ENCODE measurements at regions of chr14 and their contacts with region 1.

Region 1: DNA sequence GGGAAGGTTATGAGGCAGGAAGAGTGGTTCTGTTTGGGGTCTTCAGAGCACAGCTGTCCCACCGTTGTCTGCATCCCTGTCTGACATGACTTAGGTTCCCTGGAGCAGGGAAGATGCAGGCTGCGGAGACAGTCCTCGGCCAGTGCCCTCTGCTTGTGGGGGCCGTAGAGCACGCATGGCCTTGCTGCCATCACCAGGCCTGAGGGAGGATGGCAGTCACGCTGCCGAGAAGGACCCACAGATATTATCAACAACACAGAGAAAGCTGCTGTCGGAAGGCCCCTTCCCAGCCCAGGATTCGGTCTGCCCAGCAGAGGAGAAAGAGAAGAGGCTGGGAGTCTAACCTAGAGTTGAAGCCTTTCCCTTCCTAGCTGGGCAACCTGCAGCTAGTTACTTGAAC is 35.0 kb downstream of the ERH start:
- DNase-seq: no peak
- ATAC-seq: no peak
- H3K4me3 ChIP-seq: no peak overlapping the region
- H3K27ac ChIP-seq: no peak overlapping the region
- H3K4me1 ChIP-seq: peaks cover 13% of the 10 kb centered on the region
- H3K27me3 ChIP-seq: no peaks in the 10 kb centered on the region
- CTCF ChIP-seq: peak in 2 of 3 experiments; percentile 18 to 19; a peak in 1 of 6 replicates
- EP300 ChIP-seq: no peak
- POLR2A ChIP-seq: no peak
- RAD21 ChIP-seq: peak; percentile 50

Region 2: GRCh38 chr14:69346710-69347109 is 16.3 kb before region 1 on chr14:
- CTCF ChIA-PET with region 1: interaction called, 11 read pairs
- POLR2A ChIA-PET with region 1: interaction called, 4 read pairs
- RAD21 ChIA-PET with region 1: interaction called, 5 read pairs
- SMC1A ChIA-PET with region 1: interaction called, 10 read pairs
- in situ Hi-C with region 1: no loop called
- intact Hi-C with region 1: no loop called
- DNase-seq: no peak
- ATAC-seq: peak; percentile 34; the same call in 2 of the 3 replicates
- H3K4me3 ChIP-seq: no peak overlapping the region
- H3K27ac ChIP-seq: no peak overlapping the region
- H3K4me1 ChIP-seq: peaks cover 7% of the 10 kb centered on the region
- H3K27me3 ChIP-seq: no peaks in the 10 kb centered on the region
- CTCF ChIP-seq: peak; percentile 44 to 64 (median 49)
- EP300 ChIP-seq: no peak
- POLR2A ChIP-seq: no peak
- RAD21 ChIP-seq: peak; percentile 36; the same call in 1 of the 2 replicates

Region 3: DNA sequence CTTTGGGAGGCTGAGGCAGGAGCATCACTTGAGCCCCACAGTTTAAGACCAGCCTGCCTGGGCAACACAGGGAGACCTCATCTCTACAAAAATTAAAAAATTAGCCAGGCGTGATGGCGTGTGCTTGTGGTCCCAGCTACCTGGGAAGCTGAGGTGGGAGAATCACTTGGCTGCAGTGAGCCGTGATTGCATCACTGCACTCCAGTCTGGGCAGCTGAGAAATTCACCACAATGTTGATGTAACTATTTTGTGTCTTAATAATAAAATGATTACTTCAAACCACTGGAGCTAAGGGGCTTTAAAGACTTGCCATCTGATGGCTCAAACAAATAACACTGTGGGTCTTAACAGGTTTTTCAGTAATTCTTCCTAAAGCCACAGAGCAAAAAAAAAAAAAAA is 24.3 kb after region 1 on chr14:
- CTCF ChIA-PET with region 1: interaction called, 7 read pairs
- POLR2A ChIA-PET with region 1: interaction called, 23 read pairs
- RAD21 ChIA-PET with region 1: interaction called, 143 read pairs
- SMC1A ChIA-PET with region 1: interaction called, 21 read pairs
- in situ Hi-C with region 1: no loop called
- intact Hi-C with region 1: no loop called
- DNase-seq: no peak
- ATAC-seq: no peak
- H3K4me3 ChIP-seq: no peak overlapping the region
- H3K27ac ChIP-seq: no peak overlapping the region
- H3K4me1 ChIP-seq: peaks cover 12% of the 10 kb centered on the region
- H3K27me3 ChIP-seq: no peaks in the 10 kb centered on the region
- CTCF ChIP-seq: no peak
- EP300 ChIP-seq: no peak
- POLR2A ChIP-seq: no peak
- RAD21 ChIP-seq: no peak

Region 4: DNA sequence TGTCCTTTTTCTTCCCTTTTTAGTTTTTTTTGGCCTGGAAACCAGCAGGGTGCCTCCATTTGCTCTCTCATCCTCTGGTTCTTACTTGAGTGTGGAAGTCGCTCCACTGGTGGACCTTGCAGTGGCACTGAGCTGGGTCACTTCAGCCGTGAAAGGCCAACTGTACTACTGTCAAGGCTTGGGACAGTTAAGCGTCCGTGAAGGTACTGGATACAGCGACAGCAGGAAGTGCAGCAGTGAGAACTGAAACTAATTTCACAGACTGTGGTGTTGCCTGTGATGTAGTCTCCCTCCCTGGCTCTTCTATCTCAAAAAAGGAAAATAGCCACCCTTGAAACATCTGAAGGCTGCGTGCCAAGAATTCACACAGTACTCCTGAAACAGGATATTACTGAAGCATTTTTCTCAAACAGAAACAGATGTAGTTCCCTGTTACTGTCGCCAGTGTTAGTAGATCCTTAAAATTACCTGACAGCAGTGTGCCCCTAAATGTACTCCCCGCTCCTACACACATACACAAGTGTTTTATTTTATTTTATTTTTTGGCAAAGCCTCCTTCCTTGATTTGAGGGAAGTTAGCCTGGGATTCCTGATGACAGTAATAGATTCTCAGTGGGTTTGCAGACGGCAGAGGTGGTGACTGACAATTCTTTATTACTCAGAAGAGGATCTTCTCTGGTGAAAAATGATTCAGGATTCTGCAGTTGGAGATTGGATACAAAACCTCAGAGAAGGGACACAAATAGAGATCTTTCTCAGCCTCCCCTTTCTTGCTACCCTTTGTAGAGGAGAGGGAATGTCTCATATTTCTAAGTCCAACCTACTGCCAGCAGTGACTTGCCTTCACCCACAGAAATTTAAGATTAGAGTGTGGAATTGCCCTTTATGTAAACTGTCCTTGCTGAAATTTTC is 252.7 kb after region 1 on chr14:
- CTCF ChIA-PET with region 1: no interaction called
- POLR2A ChIA-PET with region 1: no interaction called
- RAD21 ChIA-PET with region 1: no interaction called
- SMC1A ChIA-PET with region 1: no interaction called
- in situ Hi-C with region 1: no loop called
- intact Hi-C with region 1: no loop called
- DNase-seq: peak; percentile 97
- ATAC-seq: peak; percentile 75
- H3K4me3 ChIP-seq: peak overlapping the region; percentile 88
- H3K27ac ChIP-seq: peak overlapping the region; percentile 97
- H3K4me1 ChIP-seq: peaks cover 55% of the 10 kb centered on the region
- H3K27me3 ChIP-seq: no peaks in the 10 kb centered on the region
- CTCF ChIP-seq: no peak
- EP300 ChIP-seq: peak; percentile 4 to 66; a peak in 3 of 4 replicates
- POLR2A ChIP-seq: no peak; the same call in 1 of the 2 replicates
- RAD21 ChIP-seq: no peak; the same call in 1 of the 2 replicates

Region 5: DNA sequence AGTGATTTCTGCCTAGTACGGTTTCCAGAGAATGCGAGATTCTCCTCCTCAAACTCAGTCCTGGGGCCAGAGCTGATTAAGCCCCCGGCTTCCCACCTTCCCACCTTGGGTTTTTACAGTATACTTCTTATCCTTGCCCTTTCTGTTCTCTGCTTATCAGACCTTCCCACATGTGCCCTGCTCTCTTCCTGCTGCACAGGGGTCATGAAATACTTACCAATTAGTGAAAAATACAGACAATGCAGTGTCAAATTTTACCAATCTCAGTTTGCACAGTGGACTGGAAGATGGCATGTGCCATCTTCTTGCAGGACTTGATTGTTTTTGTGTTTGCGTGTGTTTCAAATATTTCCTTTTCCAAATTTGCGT is 263.1 kb after region 1 on chr14:
- CTCF ChIA-PET with region 1: no interaction called
- POLR2A ChIA-PET with region 1: no interaction called
- RAD21 ChIA-PET with region 1: no interaction called
- SMC1A ChIA-PET with region 1: no interaction called
- in situ Hi-C with region 1: no loop called
- intact Hi-C with region 1: no loop called
- DNase-seq: no peak
- ATAC-seq: no peak
- H3K4me3 ChIP-seq: peak overlapping the region; percentile 54
- H3K27ac ChIP-seq: peak overlapping the region; percentile 82
- H3K4me1 ChIP-seq: peaks cover 61% of the 10 kb centered on the region
- H3K27me3 ChIP-seq: no peaks in the 10 kb centered on the region
- CTCF ChIP-seq: no peak
- EP300 ChIP-seq: no peak
- POLR2A ChIP-seq: no peak
- RAD21 ChIP-seq: no peak